Activated naive CD4-positive, alpha-beta T cell treated with anti-CD3 and anti-CD28 coated beads for 36 hours (primary cell): ENCODE measurements at regions of chr1 and their contacts with region 1.

Region 1: DNA sequence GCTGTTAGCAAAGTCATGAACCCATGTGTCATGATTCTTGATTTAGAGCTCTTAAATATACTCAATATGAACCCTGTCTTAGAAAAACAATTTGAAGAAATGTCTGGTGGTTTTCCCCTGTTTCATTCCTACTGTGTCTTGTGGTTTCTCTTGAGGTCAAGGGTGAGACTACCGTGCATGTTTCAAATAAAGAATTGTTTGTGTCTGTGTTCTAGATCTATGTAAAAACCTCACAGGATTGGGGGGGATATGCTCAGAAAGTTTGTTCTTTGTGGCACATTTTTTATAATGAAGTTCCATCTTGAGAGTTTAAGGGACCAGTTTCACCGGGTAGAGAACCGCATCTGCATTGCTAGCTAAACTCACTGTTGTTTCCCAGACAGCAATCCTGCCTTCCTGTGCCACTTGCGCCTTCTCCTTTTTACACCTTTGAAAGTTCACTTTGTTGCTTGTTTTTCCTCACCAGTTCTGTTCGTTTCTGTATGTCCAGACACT is 30.9 kb upstream of the CACYBP start:
- DNase-seq: peak; percentile 49
- H3K4me3 Mint-ChIP-seq: peak overlapping the region; percentile 51
- H3K27ac Mint-ChIP-seq: peak overlapping the region; percentile 86
- H3K4me1 Mint-ChIP-seq: peaks cover 63% of the 10 kb centered on the region
- H3K27me3 Mint-ChIP-seq: no peaks in the 10 kb centered on the region

Region 2: DNA sequence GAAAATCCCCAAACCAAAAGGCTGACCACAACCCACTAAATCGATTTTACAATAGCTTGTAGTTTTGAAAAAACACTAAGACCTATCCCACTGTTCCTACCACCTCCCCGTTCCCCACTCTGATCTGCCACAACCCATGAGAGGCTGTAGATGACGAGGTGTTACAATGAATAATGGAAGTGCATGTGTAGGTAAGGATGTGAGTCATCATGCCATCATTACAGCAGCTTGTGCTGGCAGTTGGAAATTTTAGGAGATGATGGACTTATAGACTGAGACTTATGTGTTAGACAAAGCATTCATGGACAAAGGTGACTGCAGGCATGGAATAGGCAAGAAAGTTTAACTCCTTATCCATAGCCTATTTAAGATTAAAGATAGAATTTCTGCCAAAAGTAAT is 153.8 kb before region 1 on chr1:
- CTCF ChIA-PET with region 1: no interaction called
- intact Hi-C with region 1: loop called (anchors 1 kb)
- DNase-seq: peak; percentile 65
- H3K4me3 Mint-ChIP-seq: no peak overlapping the region
- H3K27ac Mint-ChIP-seq: peak overlapping the region; percentile 33
- H3K4me1 Mint-ChIP-seq: peaks cover 34% of the 10 kb centered on the region
- H3K27me3 Mint-ChIP-seq: no peaks in the 10 kb centered on the region

Region 3: GRCh38 chr1:174912264-174912663 is 56.5 kb before region 1 on chr1:
- CTCF ChIA-PET with region 1: interaction called, 5 read pairs
- intact Hi-C with region 1: loop called (anchors 1 kb)
- DNase-seq: peak; percentile 59
- H3K4me3 Mint-ChIP-seq: no peak overlapping the region
- H3K27ac Mint-ChIP-seq: no peak overlapping the region
- H3K4me1 Mint-ChIP-seq: peaks cover 46% of the 10 kb centered on the region
- H3K27me3 Mint-ChIP-seq: no peaks in the 10 kb centered on the region

Region 4: GRCh38 chr1:174938281-174939007 is 30.4 kb before region 1 on chr1:
- CTCF ChIA-PET with region 1: interaction called, 3 read pairs
- intact Hi-C with region 1: loop called (anchors 1 kb)
- DNase-seq: no peak
- H3K4me3 Mint-ChIP-seq: no peak overlapping the region
- H3K27ac Mint-ChIP-seq: no peak overlapping the region
- H3K4me1 Mint-ChIP-seq: peaks cover 7% of the 10 kb centered on the region
- H3K27me3 Mint-ChIP-seq: no peaks in the 10 kb centered on the region

Region 5: DNA sequence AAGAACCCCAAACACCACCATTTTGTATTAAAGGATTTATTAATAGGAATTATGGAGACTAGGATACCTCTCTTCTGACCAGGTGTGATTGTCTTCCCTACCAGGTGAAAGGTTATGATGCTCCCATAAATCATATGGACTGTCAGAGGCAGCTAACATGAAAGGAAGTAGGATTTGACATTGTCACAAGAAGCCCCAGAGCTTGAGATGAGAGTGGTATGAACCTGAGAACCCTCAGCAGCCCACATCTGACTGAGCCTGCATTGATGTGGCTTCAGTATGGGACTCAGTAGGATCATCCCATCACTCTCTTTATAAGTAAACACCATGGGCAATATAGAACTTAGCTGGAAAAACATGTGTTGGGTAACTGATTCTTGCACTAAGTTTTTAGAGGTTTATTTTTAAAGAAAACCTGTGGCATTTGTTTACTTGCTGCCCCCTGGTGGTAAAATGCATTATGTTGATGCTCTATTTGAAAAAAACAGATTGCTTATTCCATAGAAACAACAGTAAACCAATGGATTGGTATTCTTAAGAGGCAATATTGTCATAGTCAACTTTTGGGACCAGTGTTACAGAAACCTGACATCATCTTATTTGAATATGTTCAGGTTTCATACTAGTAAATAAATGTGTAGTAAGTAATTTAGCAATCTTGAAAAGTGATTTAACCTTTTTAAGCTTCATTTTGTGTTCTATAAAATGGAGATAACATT is 14.3 kb after region 1 on chr1:
- CTCF ChIA-PET with region 1: interaction called, 15 read pairs
- intact Hi-C with region 1: no loop called
- DNase-seq: peak; percentile 56
- H3K4me3 Mint-ChIP-seq: no peak overlapping the region
- H3K27ac Mint-ChIP-seq: no peak overlapping the region
- H3K4me1 Mint-ChIP-seq: peaks cover 18% of the 10 kb centered on the region
- H3K27me3 Mint-ChIP-seq: no peaks in the 10 kb centered on the region

Region 6: DNA sequence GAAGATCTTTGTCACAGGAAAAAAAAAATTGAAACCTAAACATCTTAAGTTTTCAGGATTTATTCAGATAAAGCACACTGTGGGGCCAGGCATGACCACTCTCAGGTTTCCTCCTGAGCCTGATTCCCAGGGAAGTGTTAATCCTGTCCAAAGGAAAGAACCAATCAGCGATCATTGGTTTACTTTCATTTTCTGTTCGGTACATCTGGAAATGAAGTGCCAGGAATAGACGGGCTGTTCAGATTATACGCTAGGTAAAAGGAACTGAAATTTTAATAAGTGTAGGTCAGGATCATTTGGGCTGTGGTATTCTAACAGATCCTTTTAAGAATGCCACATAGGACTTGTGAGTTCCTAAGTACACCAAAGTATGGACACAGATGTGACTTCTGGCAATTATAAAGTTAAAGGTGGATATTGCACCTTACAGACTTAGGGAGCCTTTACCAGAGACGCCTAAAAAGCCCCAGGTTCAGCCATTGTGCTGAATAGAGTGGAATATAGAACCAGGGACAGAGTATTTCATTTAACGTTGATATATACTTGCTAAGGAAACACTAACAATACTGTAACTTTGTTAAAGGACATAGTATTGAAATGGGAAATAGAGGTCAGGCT is 21.7 kb after region 1 on chr1:
- CTCF ChIA-PET with region 1: no interaction called
- intact Hi-C with region 1: loop called (anchors 2 kb)
- DNase-seq: no peak
- H3K4me3 Mint-ChIP-seq: peak overlapping the region; percentile 75
- H3K27ac Mint-ChIP-seq: peak overlapping the region; percentile 83
- H3K4me1 Mint-ChIP-seq: peaks cover 21% of the 10 kb centered on the region
- H3K27me3 Mint-ChIP-seq: no peaks in the 10 kb centered on the region